Activated naive CD4-positive, alpha-beta T cell treated with anti-CD3 and anti-CD28 coated beads for 36 hours (primary cell): ENCODE measurements at regions of chr3 and their contacts with region 1.

Region 1: DNA sequence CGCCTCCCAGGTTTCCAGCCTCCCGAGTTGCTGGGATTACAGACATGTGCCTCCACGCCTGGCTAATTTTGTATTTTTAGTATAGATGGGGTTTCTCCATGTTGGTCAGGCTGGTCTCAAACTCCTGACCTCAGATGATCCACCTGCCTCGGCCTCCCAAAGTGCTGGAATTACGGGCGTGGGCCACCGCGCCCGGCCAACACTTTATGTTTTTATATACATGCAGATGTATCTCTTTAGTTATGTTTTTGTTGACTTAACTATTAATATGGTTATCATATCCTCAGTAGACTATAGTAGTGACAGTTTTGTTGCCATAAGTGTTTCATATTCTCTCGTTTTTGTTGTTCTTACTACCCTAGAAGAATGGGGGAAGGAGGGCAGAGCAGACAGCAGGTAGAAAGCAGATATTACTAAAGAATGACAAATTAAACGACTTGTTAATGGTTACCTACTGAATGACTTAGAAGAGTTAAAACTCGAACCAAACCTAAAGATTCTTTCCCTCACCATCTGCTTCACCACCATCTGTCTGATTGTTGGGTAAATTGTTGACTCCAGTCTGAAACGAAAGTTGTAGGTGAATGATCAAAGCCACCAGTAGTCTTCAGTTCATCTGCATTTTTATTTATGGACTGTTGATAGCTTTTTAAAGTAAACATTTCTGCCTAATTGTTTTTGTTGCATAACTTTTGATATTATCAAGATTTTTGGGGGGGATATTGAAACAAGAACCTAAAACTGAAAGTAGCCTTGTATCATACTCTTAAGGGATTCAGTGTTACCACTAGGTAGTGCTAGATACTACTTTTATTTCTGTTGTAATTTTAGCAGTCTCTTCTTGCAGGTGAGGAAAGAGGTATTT is 89.3 kb downstream of the RASA2 start:
- DNase-seq: no peak
- H3K4me3 Mint-ChIP-seq: no peak overlapping the region
- H3K27ac Mint-ChIP-seq: peak overlapping the region; percentile 63
- H3K4me1 Mint-ChIP-seq: peaks cover 14% of the 10 kb centered on the region
- H3K27me3 Mint-ChIP-seq: no peaks in the 10 kb centered on the region

Region 2: GRCh38 chr3:140753865-140754754 is 822.0 kb before region 1 on chr3:
- CTCF ChIA-PET with region 1: no interaction called
- intact Hi-C with region 1: no loop called
- DNase-seq: no peak
- H3K4me3 Mint-ChIP-seq: no peak overlapping the region
- H3K27ac Mint-ChIP-seq: no peak overlapping the region
- H3K4me1 Mint-ChIP-seq: peaks cover 3% of the 10 kb centered on the region
- H3K27me3 Mint-ChIP-seq: peaks cover 2% of the 10 kb centered on the region

Region 3: GRCh38 chr3:141881702-141882101 is 305.6 kb after region 1 on chr3:
- CTCF ChIA-PET with region 1: no interaction called
- intact Hi-C with region 1: no loop called
- DNase-seq: no peak
- H3K4me3 Mint-ChIP-seq: no peak overlapping the region
- H3K27ac Mint-ChIP-seq: no peak overlapping the region
- H3K4me1 Mint-ChIP-seq: peaks cover 57% of the 10 kb centered on the region
- H3K27me3 Mint-ChIP-seq: no peaks in the 10 kb centered on the region

Region 4: GRCh38 chr3:141998669-141999290 is 422.7 kb after region 1 on chr3:
- CTCF ChIA-PET with region 1: no interaction called
- intact Hi-C with region 1: loop called (anchors 10 kb)
- DNase-seq: no peak
- H3K4me3 Mint-ChIP-seq: no peak overlapping the region
- H3K27ac Mint-ChIP-seq: no peak overlapping the region
- H3K4me1 Mint-ChIP-seq: no peaks in the 10 kb centered on the region
- H3K27me3 Mint-ChIP-seq: no peaks in the 10 kb centered on the region